Aorta (tissue), 5 donors: ENCODE measurements at regions of chr11 and their contacts with region 1.

Region 1: DNA sequence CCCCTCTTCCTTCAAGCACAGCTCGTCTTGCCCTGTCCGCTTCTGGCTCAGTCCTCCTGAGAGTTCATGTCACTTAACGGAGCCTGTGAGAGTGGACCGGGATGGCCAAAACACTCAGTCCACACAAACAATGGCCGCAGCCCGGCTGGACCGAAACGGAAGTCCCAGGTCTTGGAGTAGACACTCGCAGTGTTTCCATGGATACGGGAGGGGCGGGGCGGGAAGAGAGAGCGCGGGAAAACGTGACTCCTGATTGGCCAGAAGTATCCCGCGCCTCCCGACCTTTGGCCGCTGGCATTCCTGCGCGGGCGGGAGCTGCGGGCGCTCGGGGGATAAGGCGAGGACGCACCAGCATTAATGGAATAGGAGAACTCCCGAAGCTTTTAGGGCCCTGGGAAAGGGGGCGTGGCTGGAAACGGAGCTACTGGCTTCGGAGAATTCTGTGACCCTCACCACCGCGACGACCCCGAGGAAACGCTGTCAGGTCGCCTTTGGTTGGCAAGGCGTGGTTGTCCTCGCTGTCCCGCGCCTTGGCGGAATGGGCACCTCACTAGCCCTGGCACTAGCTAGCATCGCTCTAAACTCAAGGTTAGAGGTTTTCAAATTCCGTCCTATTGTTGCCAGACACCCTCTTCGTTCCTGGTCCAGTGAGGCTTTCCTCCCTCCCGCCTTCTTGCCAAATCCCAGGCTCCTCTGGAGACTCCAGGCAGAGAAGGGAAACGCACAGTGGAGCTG is at the starts of genes NLRP14 and ZNF214:
- DNase-seq: peak; percentile 94 to 98
- ATAC-seq: peak; percentile 95
- H3K4me3 ChIP-seq: peak within 1 kb of the TSS; percentile 57 to 67
- H3K27ac ChIP-seq: peak within 1 kb of the TSS in 1 of 2 donors; percentile 69
- H3K4me1 ChIP-seq: peaks cover 0 to 2% of the 10 kb centered on the region in 2 donors
- H3K27me3 ChIP-seq: no peaks in the 10 kb centered on the region
- total RNA-seq, gene NLRP14: 0.10 TPM in 1 of 2 donors, not detected in the other
- total RNA-seq, gene ZNF214: 1.5 to 2.4 TPM

Region 2: DNA sequence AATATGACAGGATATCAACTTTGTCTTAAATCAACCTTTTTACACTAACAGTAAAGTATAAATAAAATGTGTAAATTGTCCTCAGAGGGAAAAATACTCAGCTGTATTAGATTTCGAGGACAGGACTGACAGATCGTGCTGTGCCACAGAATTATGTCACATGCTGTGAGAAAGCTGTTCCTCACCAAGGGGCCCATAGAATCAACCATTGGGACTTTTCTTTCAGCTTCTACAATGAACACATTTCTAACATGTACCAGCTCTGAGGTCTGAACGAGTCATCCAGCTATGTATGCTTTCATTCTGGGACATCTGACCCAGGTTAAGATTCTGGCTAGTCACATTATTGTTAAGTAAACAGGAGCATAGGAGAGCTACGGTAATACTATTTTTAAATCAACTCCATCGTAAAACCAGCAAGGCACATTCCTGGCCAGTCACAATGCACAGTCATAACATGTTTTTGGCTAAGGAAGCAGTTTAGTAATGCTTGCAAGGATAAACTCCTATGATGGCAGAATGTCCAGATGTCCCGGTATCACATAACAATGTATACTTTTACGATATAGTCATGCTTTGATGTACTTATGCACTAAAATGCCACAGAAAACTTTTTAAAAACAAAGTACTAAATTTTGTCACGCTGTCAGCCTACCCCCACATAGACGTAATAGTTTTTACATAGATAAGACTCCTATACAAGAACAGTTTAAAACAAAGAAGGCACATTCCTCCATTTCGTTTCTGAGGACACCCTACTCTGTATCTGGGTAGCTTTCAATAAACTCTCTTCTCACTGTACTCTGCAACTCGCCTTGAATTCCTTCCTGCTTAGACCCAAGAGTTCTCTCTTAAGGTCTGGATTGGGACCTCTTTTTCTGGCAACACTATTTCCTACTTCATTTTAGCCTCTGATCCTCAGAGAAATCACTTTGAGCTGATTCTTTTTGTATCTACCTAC is 27.6 kb before region 1 on chr11:
- intact Hi-C with region 1: loop called in 1 of 2 experiments (anchors 2 kb)
- DNase-seq: no peak
- ATAC-seq: peak; percentile 34
- H3K4me3 ChIP-seq: no peak overlapping the region
- H3K27ac ChIP-seq: peak overlapping the region in 1 of 2 donors; percentile 41
- H3K4me1 ChIP-seq: no peaks in the 10 kb centered on the region
- H3K27me3 ChIP-seq: no peaks in the 10 kb centered on the region

Region 3: GRCh38 chr11:8168485-8169257 is 1148.3 kb after region 1 on chr11 and contains the start of gene RIC3:
- intact Hi-C with region 1: no loop called
- DNase-seq: peak; percentile 44 to 81
- ATAC-seq: peak; percentile 60
- H3K4me3 ChIP-seq: peak within 1 kb of the TSS; percentile 33 to 44
- H3K27ac ChIP-seq: no peak within 1 kb of the TSS
- H3K4me1 ChIP-seq: no peaks in the 10 kb centered on the region
- H3K27me3 ChIP-seq: no peaks in the 10 kb centered on the region
- total RNA-seq, gene RIC3: 7.8 to 13.1 TPM